ENCODE measurements at regions of chr3 and their contacts with region 1.

Region 1: GRCh38 chr3:138051946-138052802 is 42.2 kb downstream of the CLDN18 start:
- DNase-seq: peak; percentile 32
- H3K4me3 ChIP-seq: no peak overlapping the region
- H3K27ac ChIP-seq: no peak overlapping the region
- H3K4me1 ChIP-seq: no peaks in the 10 kb centered on the region
- H3K27me3 ChIP-seq: no peaks in the 10 kb centered on the region
- CTCF ChIP-seq: peak; percentile 80 to 83

Region 2: GRCh38 chr3:137121704-137122314 is 930.4 kb before region 1 on chr3:
- CTCF ChIA-PET with region 1: interaction called, 3 read pairs
- dilution Hi-C with region 1: no loop called
- in situ Hi-C with region 1: no loop called
- intact Hi-C with region 1: loop called (anchors 5 kb)
- DNase-seq: peak; percentile 26
- H3K4me3 ChIP-seq: no peak overlapping the region
- H3K27ac ChIP-seq: no peak overlapping the region
- H3K4me1 ChIP-seq: no peaks in the 10 kb centered on the region
- H3K27me3 ChIP-seq: no peaks in the 10 kb centered on the region
- CTCF ChIP-seq: peak; percentile 82 to 89

Region 3: GRCh38 chr3:137709011-137709601 is 343.1 kb before region 1 on chr3:
- CTCF ChIA-PET with region 1: no interaction called
- dilution Hi-C with region 1: no loop called
- in situ Hi-C with region 1: no loop called
- intact Hi-C with region 1: loop called (anchors 1 kb)
- DNase-seq: peak; percentile 6
- H3K4me3 ChIP-seq: no peak overlapping the region
- H3K27ac ChIP-seq: no peak overlapping the region
- H3K4me1 ChIP-seq: no peaks in the 10 kb centered on the region
- H3K27me3 ChIP-seq: no peaks in the 10 kb centered on the region
- CTCF ChIP-seq: peak; percentile 60 to 73

Region 4: GRCh38 chr3:137978311-137978710 is 73.9 kb before region 1 on chr3:
- CTCF ChIA-PET with region 1: no interaction called
- dilution Hi-C with region 1: no loop called
- in situ Hi-C with region 1: no loop called
- intact Hi-C with region 1: no loop called
- DNase-seq: peak; percentile 6
- H3K4me3 ChIP-seq: no peak overlapping the region
- H3K27ac ChIP-seq: no peak overlapping the region
- H3K4me1 ChIP-seq: no peaks in the 10 kb centered on the region
- H3K27me3 ChIP-seq: no peaks in the 10 kb centered on the region
- CTCF ChIP-seq: no peak

Region 5: DNA sequence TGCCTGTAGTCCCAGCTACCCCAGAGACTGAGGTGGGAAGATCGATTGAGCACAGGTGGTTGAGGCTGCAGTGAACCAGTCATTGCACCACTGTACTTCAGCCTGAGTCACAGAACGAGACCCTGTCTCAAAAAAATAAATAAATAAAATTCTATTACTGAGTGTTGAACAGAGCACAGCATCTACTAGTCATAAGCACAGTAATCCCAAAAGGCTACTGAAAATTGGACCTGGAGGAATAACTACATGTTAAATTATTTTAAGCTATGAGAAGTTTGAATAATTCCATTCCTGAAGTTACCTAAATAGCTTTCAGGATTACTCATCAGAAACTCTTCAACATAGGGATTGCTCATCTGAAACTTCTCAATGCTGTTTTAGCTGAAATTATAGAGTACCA is 178.4 kb after region 1 on chr3:
- CTCF ChIA-PET with region 1: no interaction called
- dilution Hi-C with region 1: no loop called
- in situ Hi-C with region 1: no loop called
- intact Hi-C with region 1: no loop called
- DNase-seq: peak; percentile 13
- H3K4me3 ChIP-seq: no peak overlapping the region
- H3K27ac ChIP-seq: no peak overlapping the region
- H3K4me1 ChIP-seq: peaks cover 4% of the 10 kb centered on the region
- H3K27me3 ChIP-seq: no peaks in the 10 kb centered on the region
- CTCF ChIP-seq: no peak